Posterior vena cava (tissue), 2 donors: ENCODE measurements at regions of chr16 and their contacts with region 1.

Region 1: GRCh38 chr16:26561303-26561702 is 505.4 kb upstream of the C16orf82 start:
- DNase-seq: no peak

Region 2: GRCh38 chr16:26511463-26511862 is 49.8 kb before region 1 on chr16:
- intact Hi-C with region 1: loop called in 1 of 2 experiments (anchors 1 kb)
- DNase-seq: no peak